ENCODE measurements at regions of chr5 and their contacts with region 1.

Region 1: GRCh38 chr5:170993476-170993875 is 131.7 kb downstream of the RANBP17 start:
- DNase-seq: no peak
- ATAC-seq: no peak
- H3K4me3 ChIP-seq: no peak overlapping the region
- H3K27ac ChIP-seq: no peak overlapping the region
- H3K4me1 ChIP-seq: no peaks in the 10 kb centered on the region
- H3K27me3 ChIP-seq: no peaks in the 10 kb centered on the region
- CTCF ChIP-seq: no peak
- POLR2A ChIP-seq: no peak
- RAD21 ChIP-seq: no peak

Region 2: GRCh38 chr5:170892196-170892595 is 101.3 kb before region 1 on chr5:
- CTCF ChIA-PET with region 1: no interaction called
- POLR2A ChIA-PET with region 1: no interaction called
- dilution Hi-C with region 1: no loop called
- in situ Hi-C with region 1: no loop called
- intact Hi-C with region 1: no loop called
- DNase-seq: peak; percentile 90
- ATAC-seq: peak; percentile 48
- H3K4me3 ChIP-seq: no peak overlapping the region
- H3K27ac ChIP-seq: no peak overlapping the region
- H3K4me1 ChIP-seq: peaks cover 4% of the 10 kb centered on the region; the same call in 1 of the 2 replicates
- H3K27me3 ChIP-seq: no peaks in the 10 kb centered on the region
- CTCF ChIP-seq: no peak
- POLR2A ChIP-seq: no peak
- RAD21 ChIP-seq: no peak

Region 3: DNA sequence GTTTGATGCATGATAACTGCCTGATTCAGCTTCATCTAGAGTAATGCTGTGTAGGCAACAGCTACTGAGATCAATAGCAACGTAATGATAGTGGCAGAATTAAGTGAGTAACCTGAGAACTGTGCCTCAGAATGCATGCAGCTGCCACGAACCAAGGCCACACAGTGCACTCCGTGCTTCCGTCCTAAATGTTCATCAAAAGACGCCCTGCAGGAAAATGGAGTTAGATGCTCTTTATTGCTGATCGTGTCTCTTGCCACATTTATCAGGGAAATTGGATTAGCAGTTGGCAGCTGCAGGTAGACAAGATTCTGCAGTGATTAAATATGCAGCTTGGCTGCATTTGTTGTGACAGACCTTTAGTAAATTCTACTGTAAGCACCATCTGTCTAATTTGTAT is 207.8 kb after region 1 on chr5:
- CTCF ChIA-PET with region 1: no interaction called
- POLR2A ChIA-PET with region 1: no interaction called
- dilution Hi-C with region 1: no loop called
- in situ Hi-C with region 1: no loop called
- intact Hi-C with region 1: loop called (anchors 5 kb)
- DNase-seq: peak; percentile 2
- ATAC-seq: no peak
- H3K4me3 ChIP-seq: no peak overlapping the region
- H3K27ac ChIP-seq: no peak overlapping the region
- H3K4me1 ChIP-seq: no peaks in the 10 kb centered on the region
- H3K27me3 ChIP-seq: no peaks in the 10 kb centered on the region
- CTCF ChIP-seq: no peak
- POLR2A ChIP-seq: no peak
- RAD21 ChIP-seq: no peak

Measured in IMR-90 (cell line).